Activated CD4-positive, alpha-beta T cell treated with anti-CD3 and anti-CD28 coated beads, Interleukin-2, amount 10 ng/mL, durations not matched to agents 24 days and 14 days (primary cell): ENCODE measurements at regions of chr2 and their contacts with region 1.

Region 1: GRCh38 chr2:71510196-71510807 is 56.9 kb downstream of the DYSF start:
- DNase-seq: peak; percentile 90
- H3K4me3 Mint-ChIP-seq: no peak overlapping the region
- H3K27ac Mint-ChIP-seq: no peak overlapping the region
- H3K4me1 Mint-ChIP-seq: peaks cover 2% of the 10 kb centered on the region
- H3K27me3 Mint-ChIP-seq: peaks cover 4% of the 10 kb centered on the region

Region 2: GRCh38 chr2:71299507-71299906 is 210.8 kb before region 1 on chr2:
- intact Hi-C with region 1: loop called (anchors 1 kb)
- DNase-seq: peak; percentile 67
- H3K4me3 Mint-ChIP-seq: no peak overlapping the region
- H3K27ac Mint-ChIP-seq: no peak overlapping the region
- H3K4me1 Mint-ChIP-seq: no peaks in the 10 kb centered on the region
- H3K27me3 Mint-ChIP-seq: peaks cover 9% of the 10 kb centered on the region

Region 3: DNA sequence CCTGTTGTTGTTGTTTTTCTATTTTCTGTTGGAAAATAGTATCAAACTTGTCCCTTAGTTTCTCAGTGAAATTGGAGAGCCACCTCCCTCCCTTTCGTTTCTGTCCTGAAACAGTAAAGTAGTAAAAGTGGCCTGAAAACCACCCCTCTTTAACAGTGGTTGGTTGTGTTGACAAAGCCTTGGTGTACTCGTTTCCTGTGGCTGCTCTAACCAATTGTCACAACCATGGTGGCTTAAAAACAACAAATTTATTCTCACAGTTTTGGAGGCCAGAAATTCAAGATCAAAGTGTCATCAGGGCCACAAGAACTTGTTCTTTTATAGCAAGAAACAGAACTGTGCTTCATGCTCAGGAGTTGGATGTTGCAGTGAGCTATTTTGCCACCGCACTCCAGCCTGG is 61.0 kb before region 1 on chr2:
- intact Hi-C with region 1: no loop called
- DNase-seq: no peak
- H3K4me3 Mint-ChIP-seq: no peak overlapping the region
- H3K27ac Mint-ChIP-seq: no peak overlapping the region
- H3K4me1 Mint-ChIP-seq: peaks cover 17% of the 10 kb centered on the region
- H3K27me3 Mint-ChIP-seq: peaks cover 28% of the 10 kb centered on the region

Region 4: GRCh38 chr2:71460595-71461303 is 49.6 kb before region 1 on chr2:
- intact Hi-C with region 1: loop called (anchors 2 kb)
- DNase-seq: no peak
- H3K4me3 Mint-ChIP-seq: no peak overlapping the region
- H3K27ac Mint-ChIP-seq: no peak overlapping the region
- H3K4me1 Mint-ChIP-seq: peaks cover 8% of the 10 kb centered on the region
- H3K27me3 Mint-ChIP-seq: peaks cover 4% of the 10 kb centered on the region

Region 5: DNA sequence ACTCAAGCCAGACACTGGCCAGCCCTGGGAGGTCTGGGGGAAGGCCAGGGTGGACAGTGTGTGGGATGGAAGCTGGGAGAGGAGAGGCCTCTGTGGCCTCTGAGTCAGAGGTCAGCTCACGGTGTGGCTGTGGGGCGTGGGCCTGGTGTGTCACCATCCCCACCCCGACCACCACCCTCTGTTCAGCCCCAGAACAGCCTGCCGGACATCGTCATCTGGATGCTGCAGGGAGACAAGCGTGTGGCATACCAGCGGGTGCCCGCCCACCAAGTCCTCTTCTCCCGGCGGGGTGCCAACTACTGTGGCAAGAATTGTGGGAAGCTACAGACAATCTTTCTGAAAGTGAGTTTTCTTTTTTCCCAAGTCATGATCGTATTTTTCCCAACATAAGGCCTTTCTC is 53.6 kb after region 1 on chr2:
- intact Hi-C with region 1: no loop called
- DNase-seq: no peak
- H3K4me3 Mint-ChIP-seq: no peak overlapping the region
- H3K27ac Mint-ChIP-seq: no peak overlapping the region
- H3K4me1 Mint-ChIP-seq: no peaks in the 10 kb centered on the region
- H3K27me3 Mint-ChIP-seq: no peaks in the 10 kb centered on the region